ENCODE measurements at regions of chr14 and their contacts with region 1.

Region 1: DNA sequence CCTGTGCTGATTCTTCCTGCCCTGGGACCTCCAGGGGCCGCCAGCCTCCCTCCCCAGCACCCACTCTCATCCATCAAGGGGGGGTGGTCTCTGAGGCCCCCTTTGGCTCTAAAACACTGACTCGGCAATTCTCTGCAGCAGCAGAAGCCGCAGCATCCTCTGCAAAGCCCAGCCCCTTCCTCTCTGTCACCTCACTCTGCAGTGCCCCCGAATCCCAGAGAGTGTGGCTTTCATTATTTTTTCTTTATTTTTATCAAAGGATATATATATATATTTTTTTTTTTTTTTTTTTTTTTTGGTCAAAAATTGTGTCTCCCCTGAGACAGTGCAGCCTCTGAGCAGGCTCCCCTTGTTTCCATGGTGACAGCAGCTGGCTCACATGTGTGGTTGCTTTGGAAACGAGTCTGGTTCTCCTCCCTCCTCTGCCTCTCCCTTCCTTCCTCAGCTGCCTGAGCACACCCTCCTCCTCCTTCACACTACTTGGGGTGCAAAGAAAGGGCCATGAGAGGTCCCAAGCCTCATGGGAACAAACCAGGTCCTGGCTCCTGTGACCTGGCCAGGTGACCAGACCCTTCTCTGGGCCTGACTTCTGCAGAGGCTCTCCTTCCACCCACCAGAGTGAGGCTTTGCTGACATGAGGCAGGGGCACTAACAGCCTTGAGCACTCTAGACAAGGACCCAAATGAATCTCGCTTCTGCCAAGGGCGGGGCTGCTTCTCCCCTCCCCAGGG is 100.5 kb downstream of the LRRC74A start:
- DNase-seq: peak; percentile 89 to 97 (median 96)
- H3K4me3 ChIP-seq: peak overlapping the region in 5 of 7 experiments; percentile 15 to 48 (median 37)
- H3K27ac ChIP-seq: peak overlapping the region; percentile 58 to 76
- H3K4me1 ChIP-seq: peaks cover 14 to 95% (median 80%) of the 10 kb centered on the region in 4 experiments
- H3K27me3 ChIP-seq: no peaks in the 10 kb centered on the region

Region 2: DNA sequence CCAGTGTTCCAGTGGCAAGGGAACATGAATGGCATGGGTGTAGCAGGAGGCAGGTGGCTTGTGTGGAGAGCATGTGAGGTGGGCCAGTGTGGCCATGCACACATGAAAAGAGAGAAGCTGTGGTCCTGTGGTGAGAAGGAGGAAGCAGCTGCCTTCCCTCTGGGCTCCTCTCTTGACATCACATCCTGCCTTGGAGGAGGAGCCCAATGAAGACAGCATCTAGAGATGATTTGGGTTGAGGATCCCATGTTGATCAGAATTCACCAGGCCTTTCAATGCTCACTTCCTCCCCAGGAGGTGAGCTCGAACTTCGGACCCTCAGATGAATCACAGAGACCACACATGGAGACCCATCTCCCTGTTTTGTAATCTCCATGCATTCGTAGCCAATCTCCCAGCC is 17.9 kb before region 1 on chr14:
- CTCF ChIA-PET with region 1: interaction called, 82 read pairs
- POLR2A ChIA-PET with region 1: no interaction called
- DNase-seq: peak; percentile 95 to 99 (median 99)
- H3K4me3 ChIP-seq: peak overlapping the region in 2 of 7 experiments; percentile 24 to 28
- H3K27ac ChIP-seq: peak overlapping the region; percentile 56 to 79
- H3K4me1 ChIP-seq: peaks cover 2 to 38% (median 21%) of the 10 kb centered on the region in 4 experiments
- H3K27me3 ChIP-seq: no peaks in the 10 kb centered on the region

Region 3: DNA sequence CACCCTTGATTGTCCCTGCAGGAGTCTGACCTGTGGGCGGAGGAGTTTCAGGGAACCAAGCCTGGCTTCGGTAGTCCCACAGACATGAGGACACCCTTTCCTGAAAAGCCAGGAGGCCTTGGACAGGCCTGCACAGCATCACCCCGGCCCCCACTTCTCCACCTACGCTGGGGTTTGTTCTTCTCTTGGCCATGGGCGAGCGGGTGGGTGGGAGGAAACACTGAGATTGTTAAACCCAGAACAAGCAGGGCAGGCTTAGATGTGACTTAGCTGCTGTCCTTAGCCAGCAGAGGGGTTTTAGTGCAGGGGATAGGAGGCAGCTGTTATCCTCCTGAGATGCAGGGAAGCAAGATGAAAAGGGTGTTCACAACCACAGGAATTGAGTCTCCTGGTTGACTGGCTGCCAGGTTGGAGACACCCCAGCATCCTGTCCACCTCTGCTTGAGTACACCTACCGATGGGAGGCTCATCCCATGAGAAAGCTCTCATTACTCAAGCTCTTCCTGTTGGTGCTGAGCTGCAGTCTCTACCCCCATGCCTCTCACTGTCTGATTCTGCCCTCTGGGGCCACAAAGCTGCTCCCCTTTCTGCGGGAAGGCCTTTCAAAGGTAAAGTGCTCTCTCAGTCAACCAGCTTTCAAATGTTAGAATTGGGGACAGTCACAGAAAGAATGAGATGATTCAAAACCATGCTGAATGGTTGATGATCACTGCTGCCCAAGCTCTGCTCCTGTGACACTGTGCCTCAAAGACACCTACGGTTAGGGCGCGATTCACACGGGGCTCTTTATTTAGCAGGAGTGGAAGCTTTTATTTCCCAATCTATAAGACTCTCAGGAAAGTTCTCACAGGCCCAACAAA is 15.5 kb after region 1 on chr14:
- CTCF ChIA-PET with region 1: interaction called, 21 read pairs
- POLR2A ChIA-PET with region 1: interaction called, 3 read pairs
- DNase-seq: no peak
- H3K4me3 ChIP-seq: no peak overlapping the region
- H3K27ac ChIP-seq: no peak overlapping the region
- H3K4me1 ChIP-seq: peaks cover 0 to 13% (median 8%) of the 10 kb centered on the region in 4 experiments
- H3K27me3 ChIP-seq: no peaks in the 10 kb centered on the region

Region 4: GRCh38 chr14:77175607-77176242 is 249.0 kb after region 1 on chr14:
- CTCF ChIA-PET with region 1: no interaction called
- POLR2A ChIA-PET with region 1: no interaction called
- DNase-seq: no peak
- H3K4me3 ChIP-seq: no peak overlapping the region
- H3K27ac ChIP-seq: no peak overlapping the region
- H3K4me1 ChIP-seq: no peaks in the 10 kb centered on the region
- H3K27me3 ChIP-seq: peaks cover 0 to 2% (median under 1%) of the 10 kb centered on the region in 5 experiments

Measured in common myeloid progenitor, CD34-positive (primary cell).